ENCODE measurements at regions of chr5 and their contacts with region 1.

Region 1: GRCh38 chr5:10552183-10553143 is 11.4 kb upstream of the ANKRD33B start:
- DNase-seq: peak; percentile 47 to 51
- H3K4me3 ChIP-seq: no peak overlapping the region
- H3K27ac ChIP-seq: peak overlapping the region; percentile 91
- H3K4me1 ChIP-seq: peaks cover 74% of the 10 kb centered on the region
- H3K27me3 ChIP-seq: no peaks in the 10 kb centered on the region
- CTCF ChIP-seq: no peak

Region 2: DNA sequence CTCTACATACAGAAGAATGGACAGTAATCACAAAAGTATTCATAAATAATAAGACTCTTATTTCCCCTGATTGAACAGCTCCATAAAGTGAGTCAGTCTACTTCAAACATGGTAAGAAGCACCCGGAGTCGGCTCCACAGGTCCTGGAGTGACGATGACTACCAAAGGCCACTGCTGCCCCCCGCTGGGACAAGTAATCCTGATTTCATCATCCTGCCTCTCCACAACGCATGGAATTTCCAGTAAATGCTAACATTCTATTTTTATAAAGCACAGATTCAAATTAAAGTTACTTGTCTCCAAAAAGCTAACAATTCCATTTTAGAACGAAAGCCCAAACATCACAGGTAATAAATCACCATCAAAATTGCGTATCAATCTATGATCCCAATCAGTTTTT is 319.0 kb before region 1 on chr5:
- CTCF ChIA-PET with region 1: no interaction called
- POLR2A ChIA-PET with region 1: interaction called, 14 read pairs
- intact Hi-C with region 1: no loop called
- DNase-seq: peak; percentile 61 to 76
- H3K4me3 ChIP-seq: no peak overlapping the region
- H3K27ac ChIP-seq: peak overlapping the region; percentile 9; the same call in 1 of the 2 replicates
- H3K4me1 ChIP-seq: peaks cover 6% of the 10 kb centered on the region; the same call in 1 of the 2 replicates
- H3K27me3 ChIP-seq: no peaks in the 10 kb centered on the region
- CTCF ChIP-seq: peak; percentile 36; the same call in 1 of the 2 replicates

Region 3: GRCh38 chr5:10353241-10354047 is 199.0 kb before region 1 on chr5 and contains the start of gene MARCHF6:
- CTCF ChIA-PET with region 1: no interaction called
- POLR2A ChIA-PET with region 1: no interaction called
- intact Hi-C with region 1: loop called (anchors 5 kb)
- DNase-seq: peak; percentile 87 to 100
- H3K4me3 ChIP-seq: peak within 1 kb of the TSS; percentile 85
- H3K27ac ChIP-seq: peak within 1 kb of the TSS; percentile 93
- H3K4me1 ChIP-seq: peaks cover 18% of the 10 kb centered on the region
- H3K27me3 ChIP-seq: no peaks in the 10 kb centered on the region
- CTCF ChIP-seq: no peak
- total RNA-seq, gene MARCHF6: 283 and 364 TPM in 2 replicates

Region 4: GRCh38 chr5:10479226-10479721 is 73.2 kb before region 1 on chr5:
- CTCF ChIA-PET with region 1: interaction called, 4 read pairs
- POLR2A ChIA-PET with region 1: interaction called, 22 read pairs
- intact Hi-C with region 1: loop called (anchors 1 kb)
- DNase-seq: peak; percentile 97 to 98
- H3K4me3 ChIP-seq: peak overlapping the region; percentile 12; the same call in 1 of the 2 replicates
- H3K27ac ChIP-seq: peak overlapping the region; percentile 79
- H3K4me1 ChIP-seq: peaks cover 50% of the 10 kb centered on the region
- H3K27me3 ChIP-seq: no peaks in the 10 kb centered on the region
- CTCF ChIP-seq: no peak

Region 5: DNA sequence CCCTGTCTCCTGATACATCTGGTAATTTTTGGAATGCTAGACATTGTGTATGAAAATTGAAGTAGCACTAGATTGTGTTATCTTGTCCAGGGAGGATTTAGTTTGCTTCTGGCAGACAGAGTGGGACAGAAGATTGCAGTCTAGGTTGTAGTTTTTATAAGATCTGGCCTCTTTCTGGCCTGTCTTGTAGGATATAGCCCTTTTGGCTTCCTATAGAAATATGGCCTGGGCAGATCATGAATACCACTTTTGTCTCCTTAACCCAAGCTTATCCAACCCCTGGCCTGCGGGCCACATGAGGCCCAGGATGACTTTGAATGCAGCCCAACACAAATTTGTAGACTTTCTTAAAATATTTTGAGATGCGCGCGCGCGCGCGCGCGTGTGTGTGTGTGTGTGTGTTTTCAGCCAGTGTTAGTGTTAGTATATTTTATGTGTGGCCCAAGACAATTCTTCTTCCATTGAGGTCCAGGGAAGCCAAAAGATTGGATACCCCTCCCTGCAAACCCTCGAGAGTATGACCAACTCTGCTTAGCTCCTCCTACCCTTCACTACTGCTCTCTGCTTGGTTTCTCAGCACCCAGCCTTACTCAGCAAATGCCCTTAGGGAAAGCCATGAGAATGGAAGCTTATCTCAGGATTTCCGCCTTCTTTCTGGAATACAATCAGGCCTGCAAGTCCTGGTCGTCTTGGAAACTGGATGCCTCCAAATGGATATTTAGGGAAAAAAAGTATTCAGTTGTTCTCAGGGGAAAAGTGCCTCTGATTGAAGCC is 38.0 kb after region 1 on chr5:
- CTCF ChIA-PET with region 1: no interaction called
- POLR2A ChIA-PET with region 1: interaction called, 3 read pairs
- intact Hi-C with region 1: loop called (anchors 1 kb)
- DNase-seq: peak; percentile 75 to 79
- H3K4me3 ChIP-seq: no peak overlapping the region
- H3K27ac ChIP-seq: peak overlapping the region; percentile 17
- H3K4me1 ChIP-seq: peaks cover 31% of the 10 kb centered on the region
- H3K27me3 ChIP-seq: no peaks in the 10 kb centered on the region
- CTCF ChIP-seq: no peak

Region 6: DNA sequence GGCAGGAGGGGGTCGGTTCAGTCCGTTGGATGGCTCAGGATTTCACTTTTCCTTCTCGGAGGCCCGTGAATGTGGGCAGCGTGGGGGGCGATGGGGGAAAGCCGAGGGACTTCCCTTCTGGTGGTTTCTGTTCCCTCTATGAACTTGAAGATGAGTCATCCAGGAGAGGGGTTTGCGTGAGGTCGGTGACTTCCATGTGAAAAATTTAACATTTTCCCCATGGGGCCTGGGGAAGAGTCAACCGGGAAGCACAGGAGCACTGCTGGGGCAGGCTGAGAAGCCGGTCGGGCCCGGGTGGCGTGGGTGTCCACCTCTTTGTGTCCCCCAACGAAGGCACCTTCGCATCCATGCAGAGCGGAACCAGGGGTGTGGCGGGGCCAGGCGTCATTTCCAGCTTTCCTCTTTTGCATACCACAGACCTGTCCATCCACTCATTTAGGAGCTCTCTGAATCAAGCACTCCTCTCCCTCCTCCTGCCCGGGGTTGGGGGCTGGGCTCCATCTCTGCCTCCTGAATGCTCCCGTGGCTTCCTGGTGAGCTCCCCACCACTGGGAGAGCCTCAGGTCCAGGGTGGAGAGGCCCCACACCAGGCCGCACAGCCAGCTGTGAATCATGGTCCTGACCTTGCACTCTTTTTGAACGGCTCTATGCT is 79.8 kb after region 1 on chr5:
- CTCF ChIA-PET with region 1: interaction called, 7 read pairs
- POLR2A ChIA-PET with region 1: interaction called, 6 read pairs
- intact Hi-C with region 1: loop called (anchors 1 kb)
- DNase-seq: peak in 1 of 2 experiments; percentile 85
- H3K4me3 ChIP-seq: no peak overlapping the region
- H3K27ac ChIP-seq: no peak overlapping the region
- H3K4me1 ChIP-seq: peaks cover 5% of the 10 kb centered on the region; the same call in 1 of the 2 replicates
- H3K27me3 ChIP-seq: no peaks in the 10 kb centered on the region
- CTCF ChIP-seq: no peak

Region 7: DNA sequence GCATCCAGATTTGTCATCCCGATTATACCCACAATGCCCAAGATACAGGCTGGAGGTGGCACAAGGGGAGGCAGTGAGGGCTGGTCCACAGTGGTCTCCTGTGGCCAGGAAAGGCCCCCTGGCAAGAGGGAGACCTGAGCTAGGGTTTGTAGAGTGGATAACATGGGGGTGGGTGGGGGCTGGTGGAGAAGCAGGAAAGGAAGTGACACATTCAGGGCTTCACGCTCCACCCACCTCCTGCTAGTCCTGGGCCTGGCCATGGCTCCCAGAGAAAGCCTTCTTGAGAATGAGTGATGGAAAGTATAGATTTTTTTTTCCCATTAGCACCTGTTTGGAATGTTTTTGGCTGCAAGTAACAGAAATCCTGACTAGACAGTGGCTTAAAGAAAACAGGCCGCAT is 92.7 kb after region 1 on chr5:
- CTCF ChIA-PET with region 1: no interaction called
- POLR2A ChIA-PET with region 1: no interaction called
- intact Hi-C with region 1: no loop called
- DNase-seq: no peak
- H3K4me3 ChIP-seq: no peak overlapping the region
- H3K27ac ChIP-seq: no peak overlapping the region
- H3K4me1 ChIP-seq: no peaks in the 10 kb centered on the region
- H3K27me3 ChIP-seq: no peaks in the 10 kb centered on the region
- CTCF ChIP-seq: no peak